Vagina (tissue), 2 donors: ENCODE measurements at regions of chr2 and their contacts with region 1.

Region 1: DNA sequence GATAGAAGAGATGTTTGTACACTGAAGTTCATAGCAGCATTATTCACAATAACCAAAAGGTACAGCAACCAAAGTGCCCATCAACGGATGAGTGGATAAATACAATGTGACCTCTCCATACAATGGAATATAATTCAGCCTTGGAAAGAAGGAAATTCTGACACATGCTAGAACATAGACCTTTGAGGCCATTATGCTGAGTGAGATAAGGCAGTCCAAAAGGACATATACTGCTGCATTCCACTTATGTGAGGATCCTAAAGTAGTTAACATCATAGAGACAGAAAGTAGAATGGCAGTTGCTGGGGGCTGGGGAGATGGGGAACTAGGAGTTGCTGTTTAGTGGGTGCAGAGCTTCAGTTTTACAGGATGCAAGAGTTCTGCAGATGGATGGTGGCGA is 38.2 kb upstream of the GLI2 start:
- DNase-seq: no peak
- H3K4me3 ChIP-seq: no peak overlapping the region
- H3K27ac ChIP-seq: no peak overlapping the region
- H3K4me1 ChIP-seq: no peaks in the 10 kb centered on the region
- H3K27me3 ChIP-seq: no peaks in the 10 kb centered on the region
- CTCF ChIP-seq: no peak
- POLR2A ChIP-seq: no peak

Region 2: DNA sequence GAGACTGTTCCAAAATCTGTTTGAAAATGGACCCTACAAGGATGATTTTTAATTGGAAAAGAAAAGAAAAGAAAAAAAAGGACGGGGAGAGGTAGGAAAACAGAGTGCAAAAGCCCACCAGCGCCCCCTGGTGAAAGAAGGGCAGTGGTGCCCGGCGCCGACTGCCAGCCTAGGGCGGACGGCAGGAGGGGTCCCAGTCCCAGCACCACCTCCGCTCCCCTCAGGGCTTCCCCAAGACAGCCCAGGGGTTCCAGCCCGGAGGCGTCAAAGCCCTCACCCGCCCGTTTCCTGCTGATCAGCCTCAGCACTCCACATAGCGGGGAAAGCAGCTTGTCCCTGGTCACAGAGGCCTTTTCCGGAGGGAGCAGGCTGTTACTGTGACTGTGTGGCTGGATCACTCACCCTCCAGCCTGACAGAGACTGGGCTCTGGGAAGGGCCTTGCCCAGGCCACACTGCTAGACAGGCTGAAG is 373.6 kb after region 1 on chr2:
- intact Hi-C with region 1: loop called (anchors 2 kb)
- DNase-seq: no peak
- H3K4me3 ChIP-seq: no peak overlapping the region
- H3K27ac ChIP-seq: no peak overlapping the region
- H3K4me1 ChIP-seq: peaks cover 9% of the 10 kb centered on the region
- H3K27me3 ChIP-seq: peaks cover under 1% of the 10 kb centered on the region
- CTCF ChIP-seq: peak; percentile 78 to 86 (median 86)
- POLR2A ChIP-seq: no peak

Region 3: GRCh38 chr2:122391726-122392125 is 1694.3 kb after region 1 on chr2:
- intact Hi-C with region 1: no loop called
- DNase-seq: no peak
- H3K4me3 ChIP-seq: no peak overlapping the region
- H3K27ac ChIP-seq: no peak overlapping the region
- H3K4me1 ChIP-seq: no peaks in the 10 kb centered on the region
- H3K27me3 ChIP-seq: no peaks in the 10 kb centered on the region
- CTCF ChIP-seq: no peak
- POLR2A ChIP-seq: no peak